ENCODE measurements at regions of chr17 and their contacts with region 1.

Region 1: GRCh38 chr17:1365445-1366039 is 34.5 kb downstream of the YWHAE start:
- DNase-seq: peak in 1 of 2 donors; percentile 68
- ATAC-seq: peak in 7 of 8 donors; percentile 48 to 81 (median 73)
- H3K4me3 ChIP-seq: peak overlapping the region in 3 of 10 donors; percentile 8 to 9 (median 9)
- H3K27ac ChIP-seq: peak overlapping the region in 5 of 10 donors; percentile 5 to 42 (median 9)
- H3K4me1 ChIP-seq: peaks cover 16 to 99% (median 86%) of the 10 kb centered on the region in 9 donors
- H3K27me3 ChIP-seq: no peaks in the 10 kb centered on the region
- CTCF ChIP-seq: peak; percentile 81 to 93 (median 87)

Region 2: DNA sequence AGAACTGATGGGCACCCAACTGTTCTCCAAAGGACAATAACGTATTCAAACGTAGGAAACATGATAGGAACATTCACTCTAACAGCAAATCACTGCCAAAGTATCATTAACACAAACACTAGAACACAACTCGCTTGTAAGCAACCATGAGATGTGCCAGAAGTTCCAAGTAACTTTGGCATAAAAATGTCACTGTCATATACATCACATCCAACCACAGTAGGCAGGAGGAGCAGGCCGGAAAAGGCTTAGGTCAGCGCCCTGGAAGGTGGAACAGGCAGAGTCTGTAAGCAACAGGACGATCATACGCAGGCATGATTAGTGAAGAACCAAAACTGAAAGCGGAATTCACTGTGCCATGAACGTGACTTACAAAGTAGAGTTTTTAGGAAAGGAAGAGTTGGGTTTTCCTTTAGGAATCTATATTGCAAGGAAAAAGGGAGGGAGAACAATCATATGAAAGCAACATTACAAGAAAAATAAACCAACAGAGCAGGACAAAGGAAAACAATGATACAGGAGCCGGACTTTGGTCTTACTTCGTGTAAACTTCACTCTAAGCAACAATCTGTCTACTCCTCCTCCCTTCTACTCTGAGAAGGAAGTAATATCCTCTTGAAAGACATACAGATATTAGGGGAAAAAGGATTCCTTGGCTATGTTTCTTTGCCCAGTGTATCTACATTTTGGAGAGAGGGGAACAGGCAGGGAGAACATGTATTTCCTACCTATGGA is 17.8 kb before region 1 on chr17:
- intact Hi-C with region 1: no loop called
- DNase-seq: peak in 1 of 2 donors; percentile 44
- ATAC-seq: peak; percentile 53 to 84 (median 74)
- H3K4me3 ChIP-seq: peak overlapping the region in 6 of 10 donors; percentile 10 to 30 (median 26)
- H3K27ac ChIP-seq: peak overlapping the region in 8 of 10 donors; percentile 36 to 78 (median 58)
- H3K4me1 ChIP-seq: peaks cover 3 to 46% (median 32%) of the 10 kb centered on the region in 9 donors
- H3K27me3 ChIP-seq: no peaks in the 10 kb centered on the region
- CTCF ChIP-seq: no peak

Region 3: GRCh38 chr17:1399679-1400512 is 34.4 kb after region 1 on chr17 and contains the start of gene YWHAE:
- intact Hi-C with region 1: loop called in 5 of 10 experiments (anchors 2 to 5 kb)
- DNase-seq: peak; percentile 98
- ATAC-seq: peak; percentile 97 to 98 (median 98)
- H3K4me3 ChIP-seq: peak within 1 kb of the TSS; percentile 67 to 94 (median 80)
- H3K27ac ChIP-seq: peak within 1 kb of the TSS; percentile 90 to 97 (median 96)
- H3K4me1 ChIP-seq: peaks cover 5 to 49% (median 42%) of the 10 kb centered on the region in 9 donors
- H3K27me3 ChIP-seq: no peaks in the 10 kb centered on the region
- CTCF ChIP-seq: no peak
- total RNA-seq, gene YWHAE: 600 to 791 (median 620) TPM

Region 4: GRCh38 chr17:1455797-1456599 is 90.5 kb after region 1 on chr17 and contains the start of gene CRK:
- intact Hi-C with region 1: loop called in 8 of 10 experiments (anchors 2 to 10 kb)
- DNase-seq: peak; percentile 96 to 99
- ATAC-seq: peak; percentile 92 to 97 (median 95)
- H3K4me3 ChIP-seq: peak within 1 kb of the TSS; percentile 73 to 100 (median 98)
- H3K27ac ChIP-seq: peak within 1 kb of the TSS; percentile 97 to 99 (median 98)
- H3K4me1 ChIP-seq: peaks cover 17 to 67% (median 55%) of the 10 kb centered on the region in 9 donors
- H3K27me3 ChIP-seq: peaks cover 0 to 4% (median 0%) of the 10 kb centered on the region in 7 donors
- CTCF ChIP-seq: peak in 2 of 9 donors; percentile 12 to 24
- total RNA-seq, gene CRK: 30.4 to 47.5 (median 37.9) TPM

Region 5: DNA sequence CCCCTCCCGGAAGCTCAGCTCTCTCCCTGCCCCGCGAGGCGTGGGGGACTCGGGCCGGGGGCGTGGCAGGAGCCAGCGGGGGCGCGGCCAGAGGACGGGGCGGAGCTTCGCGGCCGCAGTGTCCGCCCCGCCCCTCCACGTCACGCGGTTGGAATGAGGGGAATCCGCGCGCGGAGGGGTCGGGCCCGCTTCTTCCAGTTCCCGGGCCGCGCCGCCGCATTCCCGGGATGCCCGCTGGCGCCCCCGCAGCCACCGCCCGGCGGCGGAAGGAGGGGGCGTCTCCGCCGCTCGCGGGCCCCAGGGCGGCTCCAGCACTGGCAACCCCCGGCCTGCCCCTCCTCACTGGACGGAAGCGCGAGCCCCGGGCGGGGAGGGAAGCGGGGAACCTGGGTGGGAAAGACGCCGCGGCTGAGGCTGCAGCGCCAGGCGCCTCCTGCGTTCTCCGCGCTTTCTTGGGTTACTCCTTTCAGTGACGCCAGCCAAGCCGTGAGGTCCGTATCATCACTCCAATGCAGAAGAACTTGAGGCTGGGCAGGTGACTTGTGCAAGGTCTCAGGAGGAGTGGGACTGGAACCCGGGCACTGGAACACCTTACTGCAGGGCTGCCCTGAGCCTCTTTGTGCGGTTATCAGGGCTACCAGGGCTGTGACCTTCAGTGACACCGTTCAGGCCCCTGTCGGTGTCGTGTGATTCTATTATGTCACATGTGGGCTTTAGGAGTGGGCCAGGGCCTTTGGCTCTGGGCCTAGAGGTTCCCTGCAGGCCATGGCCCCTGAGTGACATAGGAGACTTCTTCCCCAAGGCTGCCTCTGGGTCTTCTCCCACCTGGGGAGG is 122.7 kb after region 1 on chr17:
- intact Hi-C with region 1: loop called in 1 of 10 experiments (anchors 10 kb)
- DNase-seq: peak; percentile 91
- ATAC-seq: peak; percentile 59 to 75 (median 67)
- H3K4me3 ChIP-seq: peak overlapping the region; percentile 29 to 78 (median 72)
- H3K27ac ChIP-seq: peak overlapping the region; percentile 90 to 100 (median 98)
- H3K4me1 ChIP-seq: peaks cover 25 to 85% (median 74%) of the 10 kb centered on the region in 9 donors
- H3K27me3 ChIP-seq: peaks cover 0 to 48% (median 0%) of the 10 kb centered on the region in 7 donors
- CTCF ChIP-seq: peak in 3 of 9 donors; percentile 8 to 18 (median 14)